Activated CD8-positive, alpha-beta T cell treated with anti-CD3 and anti-CD28 coated beads for 36 hours (primary cell): ENCODE measurements at regions of chr3 and their contacts with region 1.

Region 1: DNA sequence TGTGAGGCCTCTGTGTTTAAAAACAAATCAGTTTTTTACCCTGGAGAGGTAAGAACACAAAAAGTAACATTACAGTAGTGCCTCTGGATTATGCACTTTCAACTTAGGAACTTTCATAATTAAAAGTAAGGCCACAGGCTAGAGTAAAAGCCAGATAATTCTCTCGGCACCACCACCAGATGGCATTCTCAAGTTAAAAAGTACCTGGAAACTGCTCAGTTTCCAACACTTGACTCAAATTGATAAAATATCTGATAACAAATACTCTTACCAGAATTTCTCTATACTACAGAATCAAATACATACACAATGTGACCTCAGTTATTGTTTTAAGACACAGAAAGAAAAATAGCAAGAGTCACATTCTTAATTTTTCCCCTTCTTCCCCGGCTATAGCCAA is 19.9 kb downstream of the SPICE1 start:
- DNase-seq: peak; percentile 61
- ATAC-seq: peak; percentile 27
- H3K4me3 Mint-ChIP-seq: no peak overlapping the region
- H3K27ac Mint-ChIP-seq: no peak overlapping the region
- H3K4me1 Mint-ChIP-seq: peaks cover 4% of the 10 kb centered on the region
- H3K27me3 Mint-ChIP-seq: no peaks in the 10 kb centered on the region
- CTCF ChIP-seq: peak; percentile 27

Region 2: GRCh38 chr3:113205479-113205878 is 289.6 kb before region 1 on chr3:
- CTCF ChIA-PET with region 1: no interaction called
- POLR2A ChIA-PET with region 1: no interaction called
- intact Hi-C with region 1: no loop called
- DNase-seq: no peak
- ATAC-seq: no peak
- H3K4me3 Mint-ChIP-seq: no peak overlapping the region
- H3K27ac Mint-ChIP-seq: no peak overlapping the region
- H3K4me1 Mint-ChIP-seq: no peaks in the 10 kb centered on the region
- H3K27me3 Mint-ChIP-seq: peaks cover 23% of the 10 kb centered on the region
- CTCF ChIP-seq: no peak

Region 3: GRCh38 chr3:113552851-113553250 is 57.8 kb after region 1 on chr3:
- CTCF ChIA-PET with region 1: interaction called, 33 read pairs
- POLR2A ChIA-PET with region 1: interaction called, 3 read pairs
- intact Hi-C with region 1: loop called (anchors 2 kb)
- DNase-seq: peak; percentile 27
- ATAC-seq: peak; percentile 60
- H3K4me3 Mint-ChIP-seq: no peak overlapping the region
- H3K27ac Mint-ChIP-seq: no peak overlapping the region
- H3K4me1 Mint-ChIP-seq: peaks cover 42% of the 10 kb centered on the region
- H3K27me3 Mint-ChIP-seq: no peaks in the 10 kb centered on the region
- CTCF ChIP-seq: no peak

Region 4: GRCh38 chr3:113560831-113561623 is 66.0 kb after region 1 on chr3:
- CTCF ChIA-PET with region 1: interaction called, 33 read pairs
- POLR2A ChIA-PET with region 1: interaction called, 3 read pairs
- intact Hi-C with region 1: no loop called
- DNase-seq: no peak
- ATAC-seq: no peak
- H3K4me3 Mint-ChIP-seq: no peak overlapping the region
- H3K27ac Mint-ChIP-seq: no peak overlapping the region
- H3K4me1 Mint-ChIP-seq: peaks cover 44% of the 10 kb centered on the region
- H3K27me3 Mint-ChIP-seq: no peaks in the 10 kb centered on the region
- CTCF ChIP-seq: no peak